HEK293 (cell line): ENCODE measurements at regions of chr19 and their contacts with region 1.

Region 1: GRCh38 chr19:556611-557382 is 12.9 kb downstream of the GZMM start:
- H3K4me3 ChIP-seq: no peak overlapping the region
- H3K27ac ChIP-seq: no peak overlapping the region
- H3K4me1 ChIP-seq: 0 out of 2 replicates have a peak, but pooled peaks cover 3% of the 10 kb centered on the region
- CTCF ChIP-seq: no peak

Region 2: DNA sequence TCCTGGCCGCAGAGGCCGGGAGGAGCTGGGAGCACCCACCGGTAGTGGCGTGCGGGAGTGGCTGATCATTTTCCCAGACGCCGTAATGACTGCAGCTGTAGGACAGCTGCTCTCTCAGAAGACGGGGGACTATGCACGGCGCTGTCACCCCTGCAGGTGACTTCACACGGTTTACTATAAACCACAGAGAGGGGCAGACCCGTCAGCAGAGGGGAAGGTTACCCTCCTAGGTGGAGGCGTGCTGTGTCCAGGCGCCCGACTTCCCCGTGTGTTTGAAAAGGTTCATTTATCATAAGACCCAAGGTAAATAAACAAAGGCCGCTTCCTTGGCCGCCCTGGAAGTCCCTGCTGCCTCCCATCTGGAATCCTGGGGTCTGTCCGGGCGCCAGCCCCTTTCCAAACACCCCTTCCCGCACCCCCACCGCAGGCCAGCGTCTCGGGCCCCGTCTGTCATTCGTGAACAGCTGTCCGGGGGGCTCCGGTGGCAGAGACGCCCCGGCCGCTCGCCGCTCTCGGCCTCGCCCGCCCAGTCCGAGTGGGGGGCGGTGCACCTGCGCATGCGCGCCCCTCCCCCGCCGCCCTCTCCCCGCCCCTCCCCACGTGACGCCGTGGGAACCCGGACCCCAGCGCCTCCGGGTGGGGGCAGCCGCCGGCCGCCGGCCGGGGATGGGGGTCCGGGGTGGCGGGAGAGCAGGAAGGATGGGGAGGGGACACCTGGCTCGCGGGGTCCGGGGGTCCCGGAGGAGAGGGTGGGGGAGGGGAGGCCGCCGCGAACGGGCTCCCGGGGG is 96.9 kb before region 1 on chr19:
- CTCF ChIA-PET with region 1: no interaction called
- POLR2A ChIA-PET with region 1: no interaction called
- H3K4me3 ChIP-seq: peak overlapping the region; percentile 66
- H3K27ac ChIP-seq: peak overlapping the region; percentile 82
- H3K4me1 ChIP-seq: no peaks in the 10 kb centered on the region
- CTCF ChIP-seq: peak; percentile 21; the same call in 1 of the 2 replicates

Region 3: GRCh38 chr19:531009-531752 is 25.6 kb before region 1 on chr19:
- CTCF ChIA-PET with region 1: interaction called, 7 read pairs
- POLR2A ChIA-PET with region 1: interaction called, 17 read pairs
- H3K4me3 ChIP-seq: peak overlapping the region; percentile 89
- H3K27ac ChIP-seq: peak overlapping the region; percentile 96
- H3K4me1 ChIP-seq: peaks cover 7% of the 10 kb centered on the region
- CTCF ChIP-seq: peak; percentile 27; the same call in 1 of the 2 replicates